Posterior vena cava (tissue), 2 donors: ENCODE measurements at regions of chr14 and their contacts with region 1.

Region 1: DNA sequence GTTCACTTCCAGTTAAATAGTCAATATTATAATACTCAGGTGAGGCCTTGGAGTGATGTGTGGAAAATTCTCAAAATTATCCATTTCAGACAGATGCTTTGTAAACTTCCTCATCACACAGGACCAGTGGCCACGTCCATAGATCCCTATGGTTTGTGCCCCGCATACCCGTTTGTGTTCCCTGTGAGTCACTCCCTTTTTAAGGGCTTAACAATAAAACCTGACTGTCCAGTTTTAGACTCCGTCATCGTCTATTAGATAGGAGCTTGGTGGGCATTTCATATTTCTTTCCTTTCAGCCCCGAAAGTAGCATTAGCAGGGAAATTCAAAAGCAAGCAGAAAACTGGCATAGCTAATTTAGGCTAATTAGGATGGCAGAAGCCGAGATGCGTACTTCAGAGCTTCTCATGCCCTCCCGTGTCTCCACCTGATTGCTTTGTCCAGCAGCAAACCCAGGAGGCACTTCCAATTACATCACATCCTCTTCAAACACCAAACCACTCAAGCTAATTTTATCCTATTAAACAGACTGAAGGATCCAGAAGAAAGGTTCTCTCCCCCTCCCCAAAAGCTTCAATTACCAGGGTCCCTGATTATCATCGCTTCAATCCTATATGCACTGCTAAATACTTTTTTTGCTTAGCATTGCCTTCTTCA is 186.6 kb upstream of the OTX2 start:
- DNase-seq: no peak

Region 2: DNA sequence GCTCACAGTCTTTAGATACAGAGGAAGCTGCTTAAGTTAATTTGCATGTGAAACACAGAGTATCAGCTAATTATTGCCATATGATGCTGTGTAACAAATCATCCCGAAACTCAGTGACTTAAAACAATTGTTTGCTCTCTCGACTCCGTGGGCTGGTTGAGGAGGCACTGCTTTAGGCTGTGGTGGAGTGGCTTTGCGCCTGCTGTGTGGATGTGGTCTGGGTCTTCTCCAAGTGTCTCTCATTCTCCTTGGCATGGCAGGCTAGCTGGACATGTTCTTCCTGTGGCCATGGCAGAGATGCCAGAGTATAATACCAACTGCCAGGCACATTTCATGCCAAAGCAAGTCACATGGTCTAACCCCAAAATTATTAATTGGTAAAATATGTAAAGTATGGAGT is 837.8 kb before region 1 on chr14:
- intact Hi-C with region 1: no loop called
- DNase-seq: no peak

Region 3: DNA sequence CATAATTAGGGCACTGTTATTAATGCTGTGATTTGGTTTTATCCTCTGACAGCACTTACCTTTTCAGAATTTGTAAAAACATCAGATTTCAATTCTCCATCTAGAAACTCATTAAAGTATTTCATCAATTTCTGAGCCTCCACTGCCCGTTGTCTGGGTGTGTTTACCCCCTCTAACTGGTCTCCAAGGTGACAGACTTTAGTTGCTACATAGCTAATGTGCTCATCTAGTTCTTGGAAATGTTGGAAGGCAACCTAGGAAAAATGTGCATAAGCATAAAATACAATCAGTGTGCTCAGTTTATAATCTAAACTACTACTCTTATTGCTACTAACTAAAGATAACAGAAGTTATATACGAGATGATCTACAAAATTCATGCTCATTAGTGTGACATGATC is 247.2 kb after region 1 on chr14:
- intact Hi-C with region 1: no loop called
- DNase-seq: no peak

Region 4: DNA sequence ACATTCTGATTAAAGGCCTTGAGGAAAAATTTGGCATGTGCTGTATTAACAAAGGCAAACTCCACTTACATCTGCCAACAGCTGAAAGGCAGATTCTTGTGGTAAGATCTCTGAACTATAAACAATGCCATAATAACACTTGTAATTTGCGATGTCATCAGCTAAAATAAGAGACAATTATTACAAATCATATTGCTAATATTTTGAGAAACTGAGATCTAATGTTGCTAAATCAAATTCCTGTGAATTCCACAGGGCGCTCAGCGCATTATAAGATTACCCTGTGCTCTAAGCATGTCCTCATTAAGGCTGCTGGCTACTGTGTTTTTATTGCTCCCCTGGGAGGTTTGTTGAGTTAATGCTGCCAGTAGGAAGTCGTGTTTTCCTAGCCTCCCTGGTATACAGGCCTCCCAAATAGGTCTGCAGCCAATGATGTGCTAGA is 1885.7 kb after region 1 on chr14:
- intact Hi-C with region 1: loop called in 1 of 2 experiments (anchors 10 kb)
- DNase-seq: no peak